CD4-positive, alpha-beta memory T cell (primary cell): ENCODE measurements at regions of chr11 and their contacts with region 1.

Region 1: DNA sequence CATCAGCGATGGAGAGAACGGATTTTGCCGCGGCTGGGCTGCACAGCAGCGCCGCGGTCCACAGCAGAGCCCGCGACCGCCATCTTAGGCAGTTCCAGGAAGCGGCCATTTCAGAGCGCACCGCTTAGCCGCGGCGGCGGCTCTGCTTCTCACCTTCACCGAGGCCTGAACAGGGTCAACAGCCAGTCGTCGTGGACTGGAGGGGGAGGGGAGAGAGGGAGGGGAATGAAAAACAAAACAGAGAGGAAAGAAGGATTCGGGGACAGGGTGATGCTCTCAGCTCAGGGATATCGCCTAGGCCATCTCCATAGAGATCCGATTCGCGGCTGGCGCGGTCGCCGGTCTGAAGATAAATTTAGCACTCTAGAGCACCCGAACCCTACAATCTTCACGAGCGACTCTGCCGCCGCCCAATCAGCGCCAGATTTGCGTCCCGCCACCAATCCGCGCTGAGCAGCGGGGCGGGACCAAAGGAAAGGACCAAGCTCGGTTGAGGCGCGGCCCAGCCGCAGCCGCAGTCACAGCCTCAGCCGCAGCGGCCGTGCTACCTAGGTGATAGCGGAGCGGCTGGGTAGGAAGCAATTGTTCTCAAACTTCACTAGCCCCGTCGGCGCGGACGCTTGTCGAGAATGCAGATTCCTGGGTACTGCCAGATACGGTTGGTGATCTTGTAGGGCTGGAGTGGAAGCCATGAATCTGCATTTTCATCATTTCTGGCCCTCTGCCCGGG is at the start of gene ZBED5:
- DNase-seq: peak; percentile 95 to 97 (median 97)
- H3K4me3 ChIP-seq: peak within 1 kb of the TSS; percentile 93 to 100
- H3K4me3 Mint-ChIP-seq: peak within 1 kb of the TSS; percentile 98 to 100 (median 99)
- H3K27ac ChIP-seq: peak within 1 kb of the TSS; percentile 93
- H3K27ac Mint-ChIP-seq: peak within 1 kb of the TSS; percentile 99 to 100 (median 99)
- H3K4me1 ChIP-seq: peaks cover 36% of the 10 kb centered on the region
- H3K4me1 Mint-ChIP-seq: peaks cover 26 to 63% (median 34%) of the 10 kb centered on the region in 4 donors
- H3K27me3 ChIP-seq: no peaks in the 10 kb centered on the region
- H3K27me3 Mint-ChIP-seq: no peaks in the 10 kb centered on the region
- total RNA-seq, gene ZBED5: 126 to 129 TPM

Region 2: DNA sequence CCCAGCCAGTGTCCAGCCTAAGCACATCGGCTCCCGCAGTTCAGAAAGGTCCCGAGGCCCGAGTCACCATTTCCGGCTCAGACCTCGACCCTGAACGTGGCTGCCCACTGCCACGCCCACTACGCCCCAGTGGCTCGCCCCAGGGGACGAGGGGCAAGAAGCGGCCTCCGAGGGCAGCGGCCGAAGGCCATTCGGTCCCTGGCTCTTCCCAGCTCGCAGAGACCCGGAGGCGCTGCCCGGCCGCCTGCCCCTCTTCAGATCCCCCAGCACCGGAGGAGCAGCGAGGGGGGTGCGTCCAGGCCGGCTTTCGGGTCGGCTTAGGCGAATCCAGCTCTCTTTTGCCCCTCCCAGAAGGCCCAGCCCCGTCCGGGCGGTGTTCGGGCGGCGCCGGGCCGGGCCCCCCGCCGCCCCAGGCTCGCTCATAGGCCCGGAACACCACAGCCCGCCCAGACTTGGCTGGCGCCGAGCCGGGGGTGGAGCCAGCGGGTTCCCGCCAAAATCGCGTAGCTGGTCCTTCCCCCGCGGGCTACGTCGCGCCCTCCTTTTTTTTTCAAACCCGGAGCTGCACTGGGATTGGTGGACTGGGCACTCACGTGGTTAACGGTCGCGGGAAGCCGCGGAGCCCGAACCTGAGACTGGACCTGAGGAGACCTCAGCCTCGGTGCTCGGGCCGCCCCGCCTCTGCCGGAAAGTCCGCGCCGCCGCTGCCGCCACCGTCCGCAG is 1284.7 kb before region 1 on chr11 and contains the start of gene WEE1:
- CTCF ChIA-PET with region 1: no interaction called
- POLR2A ChIA-PET with region 1: no interaction called
- intact Hi-C with region 1: loop called (anchors 5 kb)
- DNase-seq: peak; percentile 94 to 96 (median 95)
- H3K4me3 ChIP-seq: peak within 1 kb of the TSS; percentile 42 to 80
- H3K4me3 Mint-ChIP-seq: peak within 1 kb of the TSS; percentile 85 to 93 (median 89)
- H3K27ac ChIP-seq: peak within 1 kb of the TSS; percentile 86
- H3K27ac Mint-ChIP-seq: peak within 1 kb of the TSS; percentile 85 to 95 (median 92)
- H3K4me1 ChIP-seq: peaks cover 55% of the 10 kb centered on the region
- H3K4me1 Mint-ChIP-seq: peaks cover 24 to 56% (median 39%) of the 10 kb centered on the region in 4 donors
- H3K27me3 ChIP-seq: no peaks in the 10 kb centered on the region
- H3K27me3 Mint-ChIP-seq: no peaks in the 10 kb centered on the region
- total RNA-seq, gene WEE1: 11.1 to 11.7 TPM

Region 3: DNA sequence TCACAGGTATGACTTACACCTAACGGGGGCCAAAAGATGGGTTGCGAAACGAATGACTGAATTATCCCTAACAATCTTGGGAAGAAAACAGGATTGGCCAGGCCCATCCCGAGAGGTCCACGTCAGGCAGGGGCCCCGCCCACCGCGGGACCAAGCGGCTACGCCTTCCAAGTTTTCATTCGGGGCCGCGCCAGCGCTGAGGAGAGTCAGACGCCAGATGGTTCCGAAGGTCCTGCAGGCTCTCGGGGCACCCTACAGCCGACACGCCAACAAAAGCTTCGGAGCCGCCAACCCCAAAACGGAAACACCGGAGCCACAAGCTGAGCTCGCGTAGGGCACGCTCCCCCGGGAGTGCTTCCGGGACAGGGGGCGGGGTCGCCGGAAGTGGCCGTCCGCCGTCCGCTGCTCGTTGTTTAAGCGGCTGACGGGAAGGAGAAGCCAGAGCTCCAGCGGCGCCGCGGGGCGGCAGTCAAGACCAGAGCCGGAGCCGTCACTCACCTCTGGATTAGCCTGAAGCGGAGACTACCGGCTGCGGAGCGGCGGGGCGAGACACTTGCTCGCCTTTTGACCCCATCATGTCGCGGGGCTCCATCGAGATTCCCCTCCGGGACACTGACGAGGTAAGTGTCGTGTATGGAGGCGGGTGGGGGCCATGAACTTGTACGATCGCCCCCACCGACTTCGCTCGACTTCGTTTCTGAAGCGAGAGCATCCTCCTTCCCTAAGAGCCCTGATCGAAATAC is 106.9 kb before region 1 on chr11 and contains the start of gene CTR9:
- CTCF ChIA-PET with region 1: no interaction called
- POLR2A ChIA-PET with region 1: interaction called, 14 read pairs
- intact Hi-C with region 1: loop called (anchors 2 kb)
- DNase-seq: peak; percentile 88 to 91 (median 89)
- H3K4me3 ChIP-seq: peak within 1 kb of the TSS; percentile 95 to 96
- H3K4me3 Mint-ChIP-seq: peak within 1 kb of the TSS; percentile 92 to 98 (median 97)
- H3K27ac ChIP-seq: peak within 1 kb of the TSS; percentile 81
- H3K27ac Mint-ChIP-seq: peak within 1 kb of the TSS; percentile 81 to 97 (median 94)
- H3K4me1 ChIP-seq: peaks cover 29% of the 10 kb centered on the region
- H3K4me1 Mint-ChIP-seq: peaks cover 14 to 46% (median 20%) of the 10 kb centered on the region in 4 donors
- H3K27me3 ChIP-seq: no peaks in the 10 kb centered on the region
- H3K27me3 Mint-ChIP-seq: no peaks in the 10 kb centered on the region
- total RNA-seq, gene CTR9: 57.2 to 68.6 TPM

Region 4: GRCh38 chr11:10818594-10818993 is 39.3 kb before region 1 on chr11:
- CTCF ChIA-PET with region 1: no interaction called
- POLR2A ChIA-PET with region 1: interaction called, 12 read pairs
- intact Hi-C with region 1: no loop called
- DNase-seq: no peak
- H3K4me3 ChIP-seq: no peak overlapping the region
- H3K4me3 Mint-ChIP-seq: no peak overlapping the region
- H3K27ac ChIP-seq: no peak overlapping the region
- H3K27ac Mint-ChIP-seq: no peak overlapping the region
- H3K4me1 ChIP-seq: no peaks in the 10 kb centered on the region
- H3K4me1 Mint-ChIP-seq: no peaks in the 10 kb centered on the region
- H3K27me3 ChIP-seq: no peaks in the 10 kb centered on the region
- H3K27me3 Mint-ChIP-seq: peaks cover 4 to 7% of the 10 kb centered on the region in 2 donors

Region 5: GRCh38 chr11:11841723-11842420 is 984.0 kb after region 1 on chr11 and contains the start of gene USP47:
- CTCF ChIA-PET with region 1: no interaction called
- POLR2A ChIA-PET with region 1: interaction called, 3 read pairs
- intact Hi-C with region 1: loop called (anchors 5 kb)
- DNase-seq: peak; percentile 91 to 96 (median 95)
- H3K4me3 ChIP-seq: peak within 1 kb of the TSS; percentile 27 to 85
- H3K4me3 Mint-ChIP-seq: peak within 1 kb of the TSS in 1 of 8 donors; percentile 86
- H3K27ac ChIP-seq: peak within 1 kb of the TSS; percentile 98
- H3K27ac Mint-ChIP-seq: peak within 1 kb of the TSS in 4 of 7 donors; percentile 88 to 90 (median 90)
- H3K4me1 ChIP-seq: peaks cover 39% of the 10 kb centered on the region
- H3K4me1 Mint-ChIP-seq: peaks cover 0 to 24% (median 2%) of the 10 kb centered on the region in 4 donors
- H3K27me3 ChIP-seq: no peaks in the 10 kb centered on the region
- H3K27me3 Mint-ChIP-seq: peaks cover 8 to 11% of the 10 kb centered on the region in 2 donors
- total RNA-seq, gene USP47: 62.2 to 65.9 TPM